ENCODE measurements at regions of chr16 and their contacts with region 1.

Region 1: GRCh38 chr16:22977294-22977697 is 163.3 kb downstream of the HS3ST2 start:
- DNase-seq: peak; percentile 12
- H3K4me3 Mint-ChIP-seq: no peak overlapping the region
- H3K27ac Mint-ChIP-seq: no peak overlapping the region
- H3K4me1 Mint-ChIP-seq: no peaks in the 10 kb centered on the region
- H3K27me3 Mint-ChIP-seq: peaks cover 82% of the 10 kb centered on the region
- CTCF ChIP-seq: peak; percentile 60

Region 2: GRCh38 chr16:22763437-22764080 is 213.7 kb before region 1 on chr16:
- CTCF ChIA-PET with region 1: no interaction called
- intact Hi-C with region 1: no loop called
- DNase-seq: no peak
- H3K4me3 Mint-ChIP-seq: no peak overlapping the region
- H3K27ac Mint-ChIP-seq: no peak overlapping the region
- H3K4me1 Mint-ChIP-seq: no peaks in the 10 kb centered on the region
- H3K27me3 Mint-ChIP-seq: peaks cover under 1% of the 10 kb centered on the region
- CTCF ChIP-seq: no peak

Region 3: GRCh38 chr16:22898874-22899348 is 78.4 kb before region 1 on chr16:
- CTCF ChIA-PET with region 1: interaction called, 13 read pairs
- intact Hi-C with region 1: loop called (anchors 5 kb)
- DNase-seq: peak; percentile 86
- H3K4me3 Mint-ChIP-seq: no peak overlapping the region
- H3K27ac Mint-ChIP-seq: no peak overlapping the region
- H3K4me1 Mint-ChIP-seq: no peaks in the 10 kb centered on the region
- H3K27me3 Mint-ChIP-seq: peaks cover 17% of the 10 kb centered on the region
- CTCF ChIP-seq: peak; percentile 88

Region 4: DNA sequence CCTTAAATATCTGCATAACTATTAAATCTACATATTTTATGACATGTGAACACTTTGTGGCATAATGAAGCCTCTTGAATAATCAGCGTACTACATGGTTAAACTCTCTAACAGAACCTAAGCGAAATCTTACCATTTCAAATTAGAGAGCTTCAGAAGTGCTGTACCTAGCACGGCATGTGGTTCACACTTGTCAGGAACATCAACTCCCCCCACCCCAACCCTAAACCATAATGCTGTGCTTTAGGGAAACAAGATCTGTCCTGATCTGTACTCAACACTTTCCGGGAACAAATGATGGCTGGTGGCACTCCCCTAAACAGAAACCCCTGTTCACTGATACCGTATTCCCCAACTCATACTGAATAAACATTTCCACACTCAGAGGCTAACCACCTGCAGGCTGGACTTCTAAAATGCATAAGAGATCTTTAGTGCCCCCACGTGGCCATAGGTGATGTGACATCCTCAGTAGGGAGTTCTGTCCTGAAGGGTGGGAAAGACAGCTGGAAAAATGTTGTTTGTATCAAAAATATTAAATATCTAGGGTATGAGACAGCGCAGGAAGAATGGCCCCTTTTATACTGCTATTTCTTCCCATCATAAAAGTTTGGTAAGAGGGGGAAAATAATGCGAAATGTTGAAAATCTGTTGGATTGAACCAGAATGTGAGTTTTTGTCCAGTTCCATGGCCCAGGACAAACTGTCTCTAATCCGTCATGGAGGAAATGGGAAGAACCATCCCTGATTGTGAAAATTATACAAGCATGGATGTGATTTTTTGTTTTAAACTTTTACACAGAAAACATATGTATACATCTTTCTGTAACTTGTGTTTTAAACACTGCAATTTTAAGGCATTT is 83.4 kb after region 1 on chr16:
- CTCF ChIA-PET with region 1: interaction called, 5 read pairs
- intact Hi-C with region 1: loop called (anchors 1 kb)
- DNase-seq: peak; percentile 80
- H3K4me3 Mint-ChIP-seq: no peak overlapping the region
- H3K27ac Mint-ChIP-seq: no peak overlapping the region
- H3K4me1 Mint-ChIP-seq: no peaks in the 10 kb centered on the region
- H3K27me3 Mint-ChIP-seq: peaks cover 40% of the 10 kb centered on the region
- CTCF ChIP-seq: peak; percentile 84

Region 5: DNA sequence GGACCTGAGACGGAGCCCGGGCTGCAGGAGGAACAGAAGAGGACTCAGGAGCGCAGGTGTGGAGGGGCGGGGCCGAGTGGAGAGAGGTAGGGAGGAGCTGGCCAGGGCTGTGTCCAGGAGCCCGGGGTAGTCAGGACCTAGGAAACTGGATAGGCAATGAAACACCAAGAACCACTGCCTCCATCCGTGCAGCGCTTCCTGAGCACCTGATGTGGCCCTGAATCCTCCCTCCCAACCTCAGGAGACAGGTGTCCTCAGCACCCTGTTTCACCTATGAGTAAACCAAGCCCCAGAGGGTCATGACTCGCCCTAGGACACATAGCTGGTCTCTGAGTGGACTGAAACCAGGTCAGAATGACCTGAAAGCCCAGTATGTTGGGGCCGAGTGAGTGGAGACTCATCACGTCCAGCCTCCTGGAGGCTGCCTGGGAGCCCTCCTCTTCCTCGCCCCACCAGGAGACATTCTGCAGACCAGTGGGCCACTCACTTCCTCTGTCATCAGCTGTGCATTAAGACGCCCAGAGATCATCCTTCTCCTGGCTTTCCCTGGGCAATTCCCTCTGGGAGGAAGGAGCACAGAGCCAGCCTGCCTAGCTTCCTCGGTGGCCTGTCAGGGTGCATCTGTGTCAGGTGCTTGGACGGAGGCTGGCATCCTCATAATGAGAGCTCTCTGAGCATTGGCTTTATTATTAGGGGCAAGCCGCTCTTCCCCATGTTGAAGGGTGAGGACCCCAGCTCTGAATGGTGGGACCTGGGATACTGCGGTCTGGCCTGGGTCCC is 397.6 kb after region 1 on chr16:
- CTCF ChIA-PET with region 1: interaction called, 14 read pairs
- intact Hi-C with region 1: no loop called
- DNase-seq: peak; percentile 60
- H3K4me3 Mint-ChIP-seq: no peak overlapping the region
- H3K27ac Mint-ChIP-seq: no peak overlapping the region
- H3K4me1 Mint-ChIP-seq: peaks cover 8% of the 10 kb centered on the region
- H3K27me3 Mint-ChIP-seq: peaks cover 77% of the 10 kb centered on the region
- CTCF ChIP-seq: no peak